ACHN (cell line): ENCODE measurements at regions of chr12 and their contacts with region 1.

Region 1: GRCh38 chr12:96061864-96062453 is 26.6 kb upstream of the LTA4H start:
- DNase-seq: peak; percentile 88

Region 2: DNA sequence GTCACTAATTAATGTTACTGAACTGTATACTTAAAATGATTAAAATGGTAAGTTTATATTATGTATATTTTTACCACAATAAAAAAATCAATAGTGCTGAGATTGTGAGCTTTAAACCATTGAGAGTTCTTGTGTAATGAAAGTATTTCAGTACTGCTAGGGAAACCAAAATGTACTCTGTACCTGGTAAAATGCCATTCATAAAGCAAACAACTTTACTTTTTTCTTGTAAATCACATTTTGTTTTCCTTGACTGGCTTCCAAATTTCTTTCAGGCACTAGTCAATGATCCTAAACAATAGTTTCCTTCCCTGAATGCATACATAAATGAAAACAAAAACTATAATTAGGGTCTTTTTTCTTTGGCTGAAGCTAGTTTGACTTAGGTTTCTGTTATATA is 232.6 kb before region 1 on chr12:
- in situ Hi-C with region 1: no loop called
- DNase-seq: no peak

Region 3: GRCh38 chr12:96219698-96220206 is 157.8 kb after region 1 on chr12:
- in situ Hi-C with region 1: loop called (anchors 25 kb)
- DNase-seq: peak; percentile 100

Region 4: GRCh38 chr12:96516472-96517430 is 454.8 kb after region 1 on chr12:
- in situ Hi-C with region 1: loop called (anchors 25 kb)
- DNase-seq: peak; percentile 84